Panc1 (cell line): ENCODE measurements at regions of chr11 and their contacts with region 1.

Region 1: DNA sequence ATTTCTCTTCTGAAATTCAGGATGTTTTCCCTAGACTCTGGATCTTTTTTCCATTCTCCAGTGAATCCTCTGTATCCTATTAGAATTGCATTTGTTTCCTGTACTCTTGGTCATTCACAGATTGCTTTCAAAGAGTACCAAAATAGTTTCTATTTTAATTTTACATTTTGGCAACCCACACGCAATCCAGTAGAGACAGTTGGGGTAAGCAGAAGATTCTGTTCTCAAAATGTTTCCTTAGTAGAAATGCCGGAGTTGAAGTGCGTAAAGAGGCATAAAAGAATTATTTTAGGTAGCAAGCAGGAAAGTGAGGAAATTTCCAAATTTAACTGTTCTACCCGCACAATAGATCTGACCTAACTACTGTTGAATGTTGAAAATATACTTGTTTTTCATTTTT is 842.4 kb downstream of the LUZP2 start:
- DNase-seq: no peak
- ATAC-seq: no peak
- H3K4me3 ChIP-seq: no peak overlapping the region
- H3K27ac ChIP-seq: no peak overlapping the region
- H3K4me1 ChIP-seq: no peaks in the 10 kb centered on the region
- H3K27me3 ChIP-seq: no peaks in the 10 kb centered on the region
- CTCF ChIP-seq: no peak

Region 2: GRCh38 chr11:25566298-25567200 is 227.3 kb after region 1 on chr11:
- CTCF ChIA-PET with region 1: no interaction called
- POLR2A ChIA-PET with region 1: no interaction called
- in situ Hi-C with region 1: no loop called
- intact Hi-C with region 1: no loop called
- DNase-seq: no peak
- ATAC-seq: no peak
- H3K4me3 ChIP-seq: no peak overlapping the region
- H3K27ac ChIP-seq: no peak overlapping the region
- H3K4me1 ChIP-seq: no peaks in the 10 kb centered on the region
- H3K27me3 ChIP-seq: no peaks in the 10 kb centered on the region
- CTCF ChIP-seq: no peak

Region 3: DNA sequence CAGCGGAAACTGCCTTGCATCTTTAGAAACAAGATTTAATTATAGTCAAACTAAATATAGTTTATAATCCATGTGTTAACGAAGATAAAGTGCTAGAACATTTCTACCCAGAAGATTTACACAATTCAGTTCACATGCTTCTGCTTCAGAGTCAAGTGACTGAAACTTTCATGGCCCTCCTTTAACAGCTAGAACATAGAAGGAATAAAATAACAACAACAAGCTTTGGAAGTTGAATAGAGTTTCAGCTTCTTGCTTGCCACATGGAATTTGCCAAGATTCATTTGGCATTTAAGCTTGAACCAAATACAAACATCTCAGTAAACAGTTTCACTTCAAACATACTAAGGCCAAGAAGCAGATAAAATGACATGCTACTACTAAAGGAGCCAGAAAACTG is 316.4 kb after region 1 on chr11:
- CTCF ChIA-PET with region 1: no interaction called
- POLR2A ChIA-PET with region 1: interaction called, 10 read pairs
- in situ Hi-C with region 1: no loop called
- intact Hi-C with region 1: no loop called
- DNase-seq: no peak
- ATAC-seq: no peak
- H3K4me3 ChIP-seq: no peak overlapping the region
- H3K27ac ChIP-seq: no peak overlapping the region
- H3K4me1 ChIP-seq: no peaks in the 10 kb centered on the region
- H3K27me3 ChIP-seq: no peaks in the 10 kb centered on the region
- CTCF ChIP-seq: no peak